MCF 10A (cell line): ENCODE measurements at regions of chr1 and their contacts with region 1.

Region 1: DNA sequence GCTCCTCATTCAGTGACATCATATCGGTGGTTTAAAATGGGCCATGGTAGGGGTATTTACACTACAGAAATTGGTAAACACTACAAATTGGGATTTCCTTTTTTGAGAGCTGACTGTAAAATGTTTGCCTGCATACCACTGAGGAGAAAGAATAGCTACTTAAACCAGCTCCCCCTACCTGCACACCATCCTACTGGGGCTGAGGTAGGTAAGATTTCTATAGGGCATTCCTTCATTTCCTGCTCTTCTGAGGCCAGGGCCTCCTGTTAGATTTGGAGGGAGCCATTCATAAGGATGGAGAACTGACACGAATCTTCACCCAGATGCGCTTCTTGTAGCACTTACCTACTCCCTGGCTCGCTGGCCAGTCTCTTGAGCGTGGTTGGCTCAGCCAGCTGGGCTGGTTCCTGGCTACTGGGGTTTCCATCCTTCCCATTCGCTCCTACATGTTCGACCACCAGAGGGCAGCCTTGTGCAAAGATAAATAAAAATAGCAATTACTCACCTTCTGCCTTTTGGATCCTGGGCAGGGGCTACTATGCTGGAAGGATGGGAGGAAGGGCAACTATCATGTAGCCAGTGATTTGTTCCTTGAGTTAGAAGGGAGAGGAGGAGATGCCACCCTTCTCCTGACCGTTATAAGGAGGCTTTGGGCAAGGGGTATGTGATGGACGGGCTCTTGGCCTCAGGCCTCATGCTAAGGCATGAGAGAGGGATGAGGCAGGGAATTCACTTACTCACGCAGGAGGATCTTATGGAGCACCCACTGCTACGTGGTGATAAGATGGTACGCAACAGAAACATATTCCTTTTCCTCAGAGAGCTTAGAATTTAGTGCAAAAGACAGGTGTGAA is 10.7 kb downstream of the OPTC start:
- DNase-seq: peak; percentile 96
- H3K4me3 Mint-ChIP-seq: no peak overlapping the region
- H3K27ac Mint-ChIP-seq: no peak overlapping the region
- H3K4me1 Mint-ChIP-seq: peaks cover 22% of the 10 kb centered on the region
- H3K27me3 Mint-ChIP-seq: peaks cover 22% of the 10 kb centered on the region
- CTCF ChIP-seq: peak; percentile 94

Region 2: GRCh38 chr1:203486618-203487370 is 17.8 kb before region 1 on chr1:
- CTCF ChIA-PET with region 1: interaction called, 65 read pairs
- POLR2A ChIA-PET with region 1: no interaction called
- intact Hi-C with region 1: no loop called
- DNase-seq: no peak
- H3K4me3 Mint-ChIP-seq: peak overlapping the region; percentile 66
- H3K27ac Mint-ChIP-seq: peak overlapping the region; percentile 26
- H3K4me1 Mint-ChIP-seq: peaks cover 6% of the 10 kb centered on the region
- H3K27me3 Mint-ChIP-seq: peaks cover 7% of the 10 kb centered on the region
- CTCF ChIP-seq: no peak

Region 3: DNA sequence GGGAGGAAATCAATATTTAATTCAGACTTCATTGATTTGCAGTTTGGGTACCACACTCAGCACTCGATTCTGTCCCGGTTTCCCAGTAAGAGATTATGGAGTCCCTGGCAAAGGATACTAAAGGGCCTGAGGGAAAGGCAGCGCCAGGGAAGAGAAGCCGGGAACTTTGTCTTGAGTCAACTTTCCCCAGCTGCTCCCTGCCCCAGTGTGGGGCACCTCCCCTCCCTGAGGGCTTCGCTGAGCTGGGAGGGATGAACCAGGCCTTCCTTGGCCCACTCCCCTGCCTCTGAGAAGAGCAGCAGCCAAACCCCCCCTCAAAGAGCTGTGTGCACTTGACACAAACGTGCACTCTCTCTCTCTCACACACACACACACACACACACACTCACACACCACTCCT is 21.9 kb after region 1 on chr1:
- CTCF ChIA-PET with region 1: interaction called, 15 read pairs
- POLR2A ChIA-PET with region 1: interaction called, 3 read pairs
- intact Hi-C with region 1: no loop called
- DNase-seq: peak; percentile 60
- H3K4me3 Mint-ChIP-seq: no peak overlapping the region
- H3K27ac Mint-ChIP-seq: no peak overlapping the region
- H3K4me1 Mint-ChIP-seq: peaks cover 19% of the 10 kb centered on the region
- H3K27me3 Mint-ChIP-seq: no peaks in the 10 kb centered on the region
- CTCF ChIP-seq: no peak

Region 4: GRCh38 chr1:203692565-203693470 is 188.2 kb after region 1 on chr1:
- CTCF ChIA-PET with region 1: interaction called, 552 read pairs
- POLR2A ChIA-PET with region 1: interaction called, 19 read pairs
- intact Hi-C with region 1: loop called (anchors 2 kb)
- DNase-seq: peak; percentile 99
- H3K4me3 Mint-ChIP-seq: peak overlapping the region; percentile 61
- H3K27ac Mint-ChIP-seq: peak overlapping the region; percentile 96
- H3K4me1 Mint-ChIP-seq: peaks cover 37% of the 10 kb centered on the region
- H3K27me3 Mint-ChIP-seq: no peaks in the 10 kb centered on the region
- CTCF ChIP-seq: no peak

Region 5: DNA sequence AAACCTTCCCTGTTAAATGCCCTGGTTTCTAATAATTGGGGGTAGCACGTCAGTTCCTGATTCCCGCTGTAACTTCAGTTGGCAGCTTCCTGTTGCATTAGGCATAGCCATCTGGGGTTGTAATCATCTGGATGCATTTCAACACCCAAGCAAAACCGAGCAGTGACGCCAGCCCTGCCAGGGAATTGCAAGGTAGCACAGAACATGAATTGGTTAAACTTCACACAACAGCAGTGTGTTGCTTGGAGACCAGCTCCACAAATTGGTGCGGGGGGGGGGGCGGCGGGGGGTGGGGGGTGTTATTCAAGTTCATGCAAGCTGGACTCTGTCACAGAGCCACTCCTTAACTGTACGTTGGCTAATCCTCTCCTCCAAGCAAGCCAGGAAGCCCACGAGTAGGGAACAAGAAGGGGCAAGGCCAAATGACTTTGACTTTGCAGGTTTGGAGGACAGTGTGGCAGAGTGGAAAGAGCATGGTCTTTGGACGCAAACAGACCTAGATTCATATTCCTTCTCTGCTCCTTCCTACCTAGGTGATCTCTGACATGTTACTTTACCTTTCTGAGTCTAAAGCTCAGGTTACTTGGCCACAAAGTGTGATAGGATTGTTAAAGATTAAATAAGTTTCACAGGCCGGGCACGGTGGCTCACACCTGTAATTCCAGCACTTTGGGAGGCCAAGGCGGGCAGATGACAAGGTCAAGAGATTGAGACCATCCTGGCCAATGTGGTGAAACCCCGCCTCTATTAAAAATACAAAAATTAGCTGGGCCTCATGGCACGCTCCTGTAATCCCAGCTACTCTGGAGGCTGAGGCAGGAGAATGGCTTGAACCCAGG is 265.1 kb after region 1 on chr1:
- CTCF ChIA-PET with region 1: interaction called, 10 read pairs
- POLR2A ChIA-PET with region 1: interaction called, 3 read pairs
- intact Hi-C with region 1: no loop called
- DNase-seq: peak; percentile 99
- H3K4me3 Mint-ChIP-seq: peak overlapping the region; percentile 63
- H3K27ac Mint-ChIP-seq: peak overlapping the region; percentile 88
- H3K4me1 Mint-ChIP-seq: peaks cover 32% of the 10 kb centered on the region
- H3K27me3 Mint-ChIP-seq: no peaks in the 10 kb centered on the region
- CTCF ChIP-seq: no peak

Region 6: DNA sequence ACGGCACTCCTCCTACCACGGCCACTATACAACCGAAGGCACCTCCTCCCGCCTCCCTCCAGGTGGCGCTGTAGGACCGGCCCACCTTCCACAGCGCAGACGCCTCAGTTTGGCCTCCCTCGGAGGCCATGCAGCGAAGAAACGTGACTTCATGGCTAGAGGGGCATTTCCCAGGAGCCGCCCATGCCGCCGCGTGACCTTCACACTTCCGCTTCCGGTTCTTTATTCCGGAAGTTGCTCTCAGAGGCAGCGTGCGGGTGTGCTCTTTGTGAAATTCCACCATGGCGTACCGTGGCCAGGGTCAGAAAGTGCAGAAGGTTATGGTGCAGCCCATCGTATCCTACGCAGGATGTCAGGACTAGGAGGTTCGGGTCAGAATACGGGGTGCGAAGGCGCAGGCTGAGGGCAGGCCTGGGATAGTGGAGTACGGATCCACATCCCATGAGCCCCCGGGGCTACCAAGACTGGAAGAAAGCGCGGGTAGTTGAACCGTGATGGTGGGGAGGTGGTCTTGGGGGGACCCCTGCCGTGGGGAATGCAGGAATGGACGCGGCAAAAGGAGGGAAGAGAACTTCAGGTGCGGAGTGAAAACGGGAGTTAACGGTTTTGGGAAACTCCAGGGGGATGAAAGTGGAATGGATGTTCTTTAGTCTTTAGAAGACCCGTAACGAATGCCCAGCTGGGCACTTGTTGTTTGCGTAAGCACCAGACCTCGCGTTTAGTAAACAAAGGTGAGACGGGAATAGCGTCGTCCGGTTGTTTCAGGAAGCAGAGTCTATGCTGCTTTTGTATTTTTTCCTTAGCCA is 357.0 kb after region 1 on chr1 and contains the start of gene SNRPE:
- CTCF ChIA-PET with region 1: interaction called, 6 read pairs
- POLR2A ChIA-PET with region 1: no interaction called
- intact Hi-C with region 1: loop called (anchors 5 kb)
- DNase-seq: peak; percentile 100
- H3K4me3 Mint-ChIP-seq: peak within 1 kb of the TSS; percentile 100
- H3K27ac Mint-ChIP-seq: peak within 1 kb of the TSS; percentile 100
- H3K4me1 Mint-ChIP-seq: peaks cover 43% of the 10 kb centered on the region
- H3K27me3 Mint-ChIP-seq: no peaks in the 10 kb centered on the region
- CTCF ChIP-seq: peak; percentile 100
- total RNA-seq, gene SNRPE: 358 and 423 TPM in 2 replicates

Region 7: GRCh38 chr1:204065174-204065985 is 560.8 kb after region 1 on chr1:
- CTCF ChIA-PET with region 1: no interaction called
- POLR2A ChIA-PET with region 1: no interaction called
- intact Hi-C with region 1: no loop called
- DNase-seq: peak; percentile 60
- H3K4me3 Mint-ChIP-seq: no peak overlapping the region
- H3K27ac Mint-ChIP-seq: no peak overlapping the region
- H3K4me1 Mint-ChIP-seq: no peaks in the 10 kb centered on the region
- H3K27me3 Mint-ChIP-seq: no peaks in the 10 kb centered on the region
- CTCF ChIP-seq: no peak